CD14-positive monocyte (primary cell): ENCODE measurements at regions of chr10 and their contacts with region 1.

Region 1: DNA sequence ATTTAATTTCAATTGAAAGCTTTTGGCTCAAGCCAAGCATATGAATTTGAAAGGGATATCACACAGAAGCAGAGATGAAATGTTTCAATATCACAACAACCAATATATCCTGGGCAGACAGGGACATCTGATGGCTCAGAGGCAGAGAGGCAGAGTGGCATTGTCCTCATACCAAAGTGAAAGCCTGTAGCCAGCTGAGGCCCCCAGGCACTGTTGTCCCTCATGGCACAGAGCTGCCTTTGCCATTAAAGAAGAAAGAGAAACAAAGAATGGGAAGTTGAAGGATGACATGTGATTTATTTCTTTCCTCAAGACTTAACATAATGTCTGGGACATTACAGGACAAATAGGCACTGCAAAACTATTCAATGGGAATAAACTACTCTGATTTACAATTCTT is 504.2 kb upstream of the PCDH15 start:
- DNase-seq: no peak
- H3K4me3 ChIP-seq: no peak overlapping the region
- H3K4me3 Mint-ChIP-seq: no peak overlapping the region
- H3K27ac ChIP-seq: no peak overlapping the region
- H3K27ac Mint-ChIP-seq: no peak overlapping the region
- H3K4me1 ChIP-seq: no peaks in the 10 kb centered on the region
- H3K4me1 Mint-ChIP-seq: no peaks in the 10 kb centered on the region
- H3K27me3 ChIP-seq: no peaks in the 10 kb centered on the region
- H3K27me3 Mint-ChIP-seq: no peaks in the 10 kb centered on the region
- CTCF ChIP-seq: no peak

Region 2: GRCh38 chr10:53403688-53404087 is 1901.6 kb before region 1 on chr10:
- intact Hi-C with region 1: no loop called
- DNase-seq: no peak
- H3K4me3 ChIP-seq: no peak overlapping the region
- H3K4me3 Mint-ChIP-seq: no peak overlapping the region
- H3K27ac ChIP-seq: no peak overlapping the region
- H3K27ac Mint-ChIP-seq: no peak overlapping the region
- H3K4me1 ChIP-seq: no peaks in the 10 kb centered on the region
- H3K4me1 Mint-ChIP-seq: no peaks in the 10 kb centered on the region
- H3K27me3 ChIP-seq: no peaks in the 10 kb centered on the region
- H3K27me3 Mint-ChIP-seq: no peaks in the 10 kb centered on the region
- CTCF ChIP-seq: no peak

Region 3: DNA sequence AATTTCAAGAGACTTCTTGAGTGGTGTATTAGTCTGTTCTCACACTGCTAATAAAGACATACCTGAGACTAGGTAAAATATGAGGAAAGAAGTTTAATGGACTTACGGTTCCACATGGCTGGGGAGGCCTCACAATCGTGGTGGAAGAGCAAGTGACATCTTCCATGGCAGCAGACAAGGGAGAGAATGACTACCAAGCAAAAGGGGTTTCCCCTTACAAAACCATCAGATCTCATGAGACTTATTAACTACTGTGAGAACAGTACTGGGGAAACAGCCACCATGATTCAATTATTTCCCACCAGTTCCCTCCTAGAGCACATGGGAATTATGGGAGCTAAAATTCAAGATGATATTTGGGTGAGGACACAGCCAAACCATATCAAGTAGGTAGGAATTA is 654.7 kb before region 1 on chr10:
- intact Hi-C with region 1: loop called in 1 of 2 experiments (anchors 10 kb)
- DNase-seq: no peak
- H3K4me3 ChIP-seq: no peak overlapping the region
- H3K4me3 Mint-ChIP-seq: no peak overlapping the region
- H3K27ac ChIP-seq: no peak overlapping the region
- H3K27ac Mint-ChIP-seq: no peak overlapping the region
- H3K4me1 ChIP-seq: no peaks in the 10 kb centered on the region
- H3K4me1 Mint-ChIP-seq: no peaks in the 10 kb centered on the region
- H3K27me3 ChIP-seq: no peaks in the 10 kb centered on the region
- H3K27me3 Mint-ChIP-seq: peaks cover 0 to 2% (median 0%) of the 10 kb centered on the region in 3 donors
- CTCF ChIP-seq: no peak